ENCODE measurements at regions of chr2 and their contacts with region 1.

Region 1: DNA sequence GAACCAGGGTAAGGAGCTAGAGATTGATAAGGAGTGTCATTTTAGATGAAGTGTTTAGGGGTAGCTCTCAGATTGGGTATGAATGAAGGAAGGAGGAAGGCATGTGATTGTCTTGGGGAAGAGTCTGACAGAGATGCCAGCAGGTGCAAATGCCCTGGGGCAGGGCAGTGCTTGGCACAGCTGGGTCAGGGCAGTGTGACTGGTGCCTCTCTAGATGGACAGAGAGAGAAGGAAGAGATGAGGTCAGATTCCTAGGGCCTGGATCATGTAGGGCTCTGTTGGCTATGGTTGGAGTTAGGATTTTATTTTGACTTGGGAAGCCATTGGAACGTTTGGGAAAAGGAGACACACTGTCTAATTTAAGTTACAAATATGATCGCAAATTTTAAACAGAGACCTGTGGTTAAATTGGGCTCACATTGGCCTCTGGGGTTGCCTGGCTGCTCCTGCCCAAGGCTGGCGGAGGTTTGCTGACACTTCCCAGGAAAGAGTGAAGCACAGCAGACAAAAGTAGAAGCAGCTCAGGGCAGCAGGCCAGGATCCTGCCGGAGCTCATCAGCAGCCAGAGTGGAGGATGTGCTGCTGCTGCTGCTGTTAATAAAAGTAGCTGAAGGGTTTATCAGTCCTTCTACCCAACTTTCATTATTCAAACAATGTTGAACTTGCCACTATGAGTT is 32.7 kb upstream of the FHL2 start:
- DNase-seq: no peak
- H3K4me3 ChIP-seq: no peak overlapping the region
- CTCF ChIP-seq: no peak

Region 2: DNA sequence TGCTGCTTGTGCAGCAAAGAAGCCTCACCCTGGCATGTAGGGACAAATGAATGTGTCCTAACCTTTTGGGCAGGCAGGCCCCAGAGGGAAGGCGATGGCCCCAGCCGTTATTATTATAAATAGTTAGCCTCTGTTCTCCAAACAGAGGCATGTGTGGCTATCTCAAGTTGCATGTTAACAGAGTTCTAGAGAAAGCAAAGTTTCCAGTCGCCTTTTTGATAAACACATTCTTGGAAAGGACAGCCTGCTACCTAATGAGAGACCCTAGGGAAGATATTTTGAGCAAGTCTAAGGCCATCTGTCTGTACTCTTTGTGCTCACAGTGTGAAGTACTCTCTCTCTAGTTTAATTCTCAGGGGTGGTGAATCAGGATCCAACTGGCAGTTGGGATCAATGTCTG is 64.8 kb after region 1 on chr2:
- in situ Hi-C with region 1: loop called (anchors 5 kb)
- DNase-seq: no peak
- H3K4me3 ChIP-seq: no peak overlapping the region
- CTCF ChIP-seq: no peak

Measured in astrocyte of the cerebellum (primary cell).